H1 (cell line): ENCODE measurements at regions of chr7 and their contacts with region 1.

Region 1: DNA sequence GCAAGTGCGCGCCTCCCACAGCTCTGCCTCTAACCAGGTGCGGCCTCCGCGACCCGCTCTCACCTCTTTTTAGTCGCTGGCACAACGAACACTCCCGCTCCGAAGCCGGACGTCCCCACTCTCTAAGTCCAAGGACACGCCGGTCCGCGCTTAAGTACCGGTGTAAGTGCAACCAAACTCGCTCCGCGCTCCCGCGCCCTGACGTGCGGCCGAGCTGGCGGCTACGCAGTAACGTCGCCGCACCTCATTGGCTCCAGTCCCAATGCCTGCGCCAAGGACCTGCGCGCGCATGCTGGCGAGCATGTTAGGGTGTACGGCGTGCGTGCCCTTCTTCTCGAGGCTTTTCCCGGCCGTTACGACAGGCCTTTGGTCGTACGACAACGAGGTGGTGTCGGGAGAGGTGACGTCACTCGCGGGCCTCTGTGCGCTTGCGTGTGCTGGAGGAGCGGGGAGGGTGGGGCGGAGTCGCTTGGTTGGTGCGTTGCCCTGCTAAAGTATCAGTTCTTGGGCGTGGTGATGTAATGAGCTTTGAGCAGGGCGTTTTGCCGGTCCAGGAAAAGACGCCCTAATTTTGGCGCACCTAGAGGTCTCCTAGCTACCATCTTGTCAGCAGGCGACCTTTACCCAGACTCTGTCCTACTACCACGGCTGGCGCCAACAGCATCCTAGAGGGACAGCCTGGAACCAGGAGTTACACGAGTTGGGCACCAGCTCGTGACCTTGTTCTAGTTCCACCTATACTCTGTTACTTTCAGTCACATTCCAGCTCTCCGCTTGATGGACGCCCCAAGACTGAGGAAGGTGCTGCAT is at the start of gene CYCS:
- DNase-seq: peak; percentile 98 to 100
- H3K4me3 ChIP-seq: peak within 1 kb of the TSS; percentile 84 to 100 (median 98)
- H3K27ac ChIP-seq: peak within 1 kb of the TSS; percentile 94
- H3K4me1 ChIP-seq: no peaks in the 10 kb centered on the region
- H3K27me3 ChIP-seq: no peaks in the 10 kb centered on the region
- CTCF ChIP-seq: no peak
- EP300 ChIP-seq: no peak
- POLR2A ChIP-seq: peak; percentile 98 to 99
- RAD21 ChIP-seq: no peak
- total RNA-seq, gene CYCS: 229 and 231 TPM in 2 replicates

Region 2: DNA sequence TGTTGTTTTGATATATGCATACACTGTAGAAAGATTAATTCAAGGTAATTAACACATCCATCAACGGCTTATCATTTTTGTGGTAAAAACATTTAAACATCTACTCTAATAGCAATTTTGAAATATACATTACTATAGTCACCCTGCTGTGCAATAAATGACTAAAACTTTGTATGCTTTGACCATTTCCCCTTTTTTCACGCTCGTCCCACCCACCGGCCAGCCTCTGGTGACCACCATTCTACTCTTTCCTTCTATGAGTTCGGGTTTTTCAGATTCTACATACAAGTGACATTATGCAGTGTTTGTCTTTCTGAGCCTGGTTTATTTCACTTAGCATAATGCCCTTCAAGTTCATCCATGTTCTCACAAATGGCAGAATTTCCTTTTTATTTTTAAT is 21.6 kb before region 1 on chr7:
- CTCF ChIA-PET with region 1: interaction called, 6 read pairs
- POLR2A ChIA-PET with region 1: interaction called, 15 read pairs
- DNase-seq: no peak
- H3K4me3 ChIP-seq: no peak overlapping the region
- H3K27ac ChIP-seq: no peak overlapping the region
- H3K4me1 ChIP-seq: no peaks in the 10 kb centered on the region
- H3K27me3 ChIP-seq: no peaks in the 10 kb centered on the region
- CTCF ChIP-seq: no peak
- EP300 ChIP-seq: no peak
- POLR2A ChIP-seq: no peak
- RAD21 ChIP-seq: no peak

Region 3: GRCh38 chr7:25109276-25109675 is 16.1 kb before region 1 on chr7:
- CTCF ChIA-PET with region 1: interaction called, 3 read pairs
- POLR2A ChIA-PET with region 1: interaction called, 89 read pairs
- DNase-seq: no peak
- H3K4me3 ChIP-seq: no peak overlapping the region
- H3K27ac ChIP-seq: no peak overlapping the region
- H3K4me1 ChIP-seq: no peaks in the 10 kb centered on the region
- H3K27me3 ChIP-seq: no peaks in the 10 kb centered on the region
- CTCF ChIP-seq: no peak
- EP300 ChIP-seq: no peak
- POLR2A ChIP-seq: no peak
- RAD21 ChIP-seq: no peak

Region 4: GRCh38 chr7:25139536-25139935 is 14.2 kb after region 1 on chr7:
- CTCF ChIA-PET with region 1: no interaction called
- POLR2A ChIA-PET with region 1: interaction called, 37 read pairs
- DNase-seq: no peak
- H3K4me3 ChIP-seq: no peak overlapping the region
- H3K27ac ChIP-seq: no peak overlapping the region
- H3K4me1 ChIP-seq: peaks cover 0 to 2% (median 0%) of the 10 kb centered on the region in 4 experiments; a peak in 1 of 7 replicates
- H3K27me3 ChIP-seq: no peaks in the 10 kb centered on the region
- CTCF ChIP-seq: no peak
- EP300 ChIP-seq: no peak
- POLR2A ChIP-seq: no peak
- RAD21 ChIP-seq: no peak

Region 5: GRCh38 chr7:25148772-25149575 is 23.6 kb after region 1 on chr7:
- CTCF ChIA-PET with region 1: interaction called, 6 read pairs
- POLR2A ChIA-PET with region 1: interaction called, 31 read pairs
- DNase-seq: no peak
- H3K4me3 ChIP-seq: no peak overlapping the region; a peak in 1 of 8 replicates
- H3K27ac ChIP-seq: no peak overlapping the region
- H3K4me1 ChIP-seq: peaks cover 0 to 5% (median 1%) of the 10 kb centered on the region in 4 experiments; a peak in 2 of 7 replicates
- H3K27me3 ChIP-seq: no peaks in the 10 kb centered on the region
- CTCF ChIP-seq: peak in 2 of 3 experiments; percentile 3 to 11; a peak in 2 of 4 replicates
- EP300 ChIP-seq: no peak
- POLR2A ChIP-seq: no peak
- RAD21 ChIP-seq: peak in 1 of 2 experiments; percentile 27; a peak in 2 of 4 replicates

Region 6: GRCh38 chr7:25171071-25171470 is 45.7 kb after region 1 on chr7:
- CTCF ChIA-PET with region 1: no interaction called
- POLR2A ChIA-PET with region 1: interaction called, 10 read pairs
- DNase-seq: no peak
- H3K4me3 ChIP-seq: no peak overlapping the region; a peak in 1 of 8 replicates
- H3K27ac ChIP-seq: no peak overlapping the region
- H3K4me1 ChIP-seq: peaks cover 1 to 5% (median 3%) of the 10 kb centered on the region in 4 experiments; a peak in 2 of 7 replicates
- H3K27me3 ChIP-seq: no peaks in the 10 kb centered on the region
- CTCF ChIP-seq: no peak
- EP300 ChIP-seq: no peak
- POLR2A ChIP-seq: no peak
- RAD21 ChIP-seq: no peak

Region 7: GRCh38 chr7:25179771-25180591 is 54.6 kb after region 1 on chr7:
- CTCF ChIA-PET with region 1: interaction called, 3 read pairs
- POLR2A ChIA-PET with region 1: interaction called, 13 read pairs
- DNase-seq: peak; percentile 87 to 100
- H3K4me3 ChIP-seq: peak overlapping the region; percentile 67 to 80 (median 73)
- H3K27ac ChIP-seq: no peak overlapping the region
- H3K4me1 ChIP-seq: peaks cover 0 to 6% (median 5%) of the 10 kb centered on the region in 4 experiments; a peak in 5 of 7 replicates
- H3K27me3 ChIP-seq: peaks cover 0 to 4% (median 3%) of the 10 kb centered on the region in 4 experiments; a peak in 5 of 7 replicates
- CTCF ChIP-seq: peak; percentile 64 to 70 (median 65)
- EP300 ChIP-seq: peak in 1 of 2 experiments; percentile 44; a peak in 1 of 3 replicates
- POLR2A ChIP-seq: peak; percentile 38 to 73
- RAD21 ChIP-seq: peak; percentile 44 to 59; a peak in 3 of 4 replicates

Region 8: DNA sequence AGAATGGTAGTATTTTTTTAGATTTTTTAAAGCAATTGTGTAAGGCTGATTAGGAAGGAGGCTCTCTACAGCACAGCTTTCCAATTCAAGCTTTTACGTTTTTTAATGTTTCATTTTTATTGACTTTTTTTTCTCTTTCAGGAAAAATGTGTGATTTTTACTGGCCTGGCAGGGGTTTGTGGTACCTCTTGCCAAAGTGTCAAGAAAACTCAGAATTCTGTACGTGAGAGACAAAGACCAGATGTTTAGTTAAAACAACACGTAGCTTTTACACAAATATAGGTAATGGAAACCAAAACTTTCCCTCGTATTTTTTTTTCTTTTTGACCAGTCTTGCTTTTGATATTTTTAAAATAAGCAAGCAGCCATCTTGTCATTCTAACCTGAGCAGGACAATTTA is 109.0 kb after region 1 on chr7:
- CTCF ChIA-PET with region 1: no interaction called
- POLR2A ChIA-PET with region 1: no interaction called
- DNase-seq: no peak
- H3K4me3 ChIP-seq: no peak overlapping the region
- H3K27ac ChIP-seq: no peak overlapping the region
- H3K4me1 ChIP-seq: no peaks in the 10 kb centered on the region
- H3K27me3 ChIP-seq: no peaks in the 10 kb centered on the region
- CTCF ChIP-seq: no peak
- EP300 ChIP-seq: no peak
- POLR2A ChIP-seq: no peak
- RAD21 ChIP-seq: no peak